ENCODE measurements at regions of chr2 and their contacts with region 1.

Region 1: DNA sequence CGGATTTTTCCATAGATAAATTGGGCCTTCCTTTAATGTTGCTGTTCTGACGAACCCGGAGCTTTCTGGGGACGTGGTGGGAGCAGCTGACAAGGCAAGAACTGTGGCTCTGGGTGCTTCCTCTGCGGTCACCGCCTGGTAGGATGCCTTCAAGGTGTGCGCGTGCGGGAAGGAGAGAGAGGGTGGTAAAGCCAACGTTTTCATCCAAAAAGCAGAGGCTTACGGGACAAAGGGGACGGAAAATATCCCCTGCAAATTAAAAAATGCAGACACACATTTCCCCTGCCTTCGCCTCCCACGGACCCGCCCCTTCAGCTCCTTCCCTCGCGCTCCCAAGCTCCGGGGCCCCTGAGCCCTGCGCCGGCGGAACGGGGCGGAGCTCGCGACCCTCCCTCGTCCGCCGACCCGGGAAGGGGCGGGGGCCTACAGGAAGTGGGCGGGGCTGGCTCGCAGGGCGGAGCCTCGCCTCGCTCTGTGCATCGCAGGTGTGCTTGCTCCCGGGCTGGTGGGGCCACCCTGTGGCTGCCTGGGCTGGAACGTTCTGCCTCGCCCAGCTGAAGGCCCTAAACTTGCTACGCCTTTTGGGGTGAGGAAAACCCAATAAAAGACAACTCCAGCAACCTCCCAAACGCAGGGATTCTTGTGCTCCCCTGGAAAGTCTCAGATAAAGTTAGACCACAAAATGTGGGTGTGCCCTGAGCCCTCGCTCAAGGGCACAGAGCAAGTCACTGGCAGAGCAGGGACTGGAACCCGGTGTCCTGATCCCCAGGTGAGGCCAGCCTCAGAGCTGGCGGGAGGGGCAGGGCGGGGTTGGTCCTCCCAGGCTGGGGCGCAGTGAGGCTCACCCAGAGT is 25.4 kb upstream of the SLC66A3 start:
- DNase-seq: peak; percentile 82 to 95 (median 90)
- ATAC-seq: peak; percentile 78 to 89 (median 86)
- H3K4me3 ChIP-seq: peak overlapping the region; percentile 18 to 44 (median 32)
- H3K27ac ChIP-seq: peak overlapping the region; percentile 11 to 68 (median 42)
- H3K4me1 ChIP-seq: peaks cover 5 to 7% (median 6%) of the 10 kb centered on the region in 3 donors
- H3K27me3 ChIP-seq: no peaks in the 10 kb centered on the region
- CTCF ChIP-seq: peak in 3 of 4 donors; percentile 12 to 40 (median 30)

Region 2: GRCh38 chr2:11224887-11225286 is 95.1 kb after region 1 on chr2:
- intact Hi-C with region 1: loop called in 1 of 3 experiments (anchors 10 kb)
- DNase-seq: no peak
- ATAC-seq: no peak
- H3K4me3 ChIP-seq: no peak overlapping the region
- H3K27ac ChIP-seq: no peak overlapping the region
- H3K4me1 ChIP-seq: no peaks in the 10 kb centered on the region
- H3K27me3 ChIP-seq: no peaks in the 10 kb centered on the region
- CTCF ChIP-seq: no peak

Region 3: DNA sequence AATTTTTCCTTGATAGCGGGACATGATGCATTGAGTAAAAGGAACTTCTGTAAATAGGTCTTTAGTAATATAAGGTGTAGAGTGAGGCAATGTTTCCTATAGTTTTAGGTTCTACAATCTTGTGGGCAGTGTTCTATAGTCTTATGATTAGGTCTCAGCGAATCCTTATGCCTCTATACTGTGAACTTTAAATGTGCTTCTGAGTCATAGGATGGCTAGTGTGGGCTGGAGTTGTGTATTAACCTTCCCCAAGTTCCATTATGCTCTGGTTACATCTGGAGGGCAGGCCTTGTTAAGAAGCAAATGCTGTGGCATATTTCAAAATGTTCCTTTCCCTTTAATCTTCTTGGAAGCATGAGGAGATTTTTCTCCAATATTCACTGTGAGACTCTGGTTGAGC is 141.1 kb after region 1 on chr2:
- intact Hi-C with region 1: no loop called
- DNase-seq: no peak
- ATAC-seq: no peak
- H3K4me3 ChIP-seq: no peak overlapping the region
- H3K27ac ChIP-seq: no peak overlapping the region
- H3K4me1 ChIP-seq: no peaks in the 10 kb centered on the region
- H3K27me3 ChIP-seq: no peaks in the 10 kb centered on the region
- CTCF ChIP-seq: no peak

Region 4: GRCh38 chr2:11642974-11643373 is 513.1 kb after region 1 on chr2:
- intact Hi-C with region 1: no loop called
- DNase-seq: no peak
- ATAC-seq: no peak
- H3K4me3 ChIP-seq: no peak overlapping the region
- H3K27ac ChIP-seq: no peak overlapping the region
- H3K4me1 ChIP-seq: no peaks in the 10 kb centered on the region
- H3K27me3 ChIP-seq: no peaks in the 10 kb centered on the region
- CTCF ChIP-seq: no peak

Measured in pancreas (tissue), 10 donors.